ENCODE measurements at regions of chr1 and their contacts with region 1.

Region 1: DNA sequence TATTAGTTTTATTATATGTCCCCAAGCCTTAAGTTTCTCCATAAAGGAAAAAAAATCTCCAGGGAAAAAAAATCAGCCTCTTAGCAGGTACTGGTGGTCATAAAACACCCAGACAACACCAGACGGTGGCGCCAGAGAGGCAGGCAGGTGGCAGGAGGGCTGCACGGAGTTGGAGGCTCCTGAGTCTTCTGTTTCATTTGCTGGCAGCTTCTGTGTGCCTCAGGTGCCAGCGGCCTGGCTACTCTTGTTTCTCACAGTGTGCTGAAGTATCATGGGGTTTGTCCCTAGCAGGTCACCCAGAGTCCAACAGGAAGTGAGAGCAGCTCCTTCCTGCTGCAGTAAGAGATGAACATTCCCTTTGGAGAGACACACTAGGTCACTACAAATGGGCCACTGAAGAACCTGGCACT is 123.3 kb upstream of the GADD45A start:
- DNase-seq: peak; percentile 49 to 82
- ATAC-seq: peak; percentile 91 to 95
- H3K4me3 ChIP-seq: no peak overlapping the region
- H3K27ac ChIP-seq: peak overlapping the region; percentile 60 to 73; a peak in 4 of 6 replicates
- H3K4me1 ChIP-seq: peaks cover 20% of the 10 kb centered on the region
- CTCF ChIP-seq: peak; percentile 76
- EP300 ChIP-seq: no peak
- POLR2A ChIP-seq: no peak
- RAD21 ChIP-seq: peak; percentile 85 to 87

Region 2: DNA sequence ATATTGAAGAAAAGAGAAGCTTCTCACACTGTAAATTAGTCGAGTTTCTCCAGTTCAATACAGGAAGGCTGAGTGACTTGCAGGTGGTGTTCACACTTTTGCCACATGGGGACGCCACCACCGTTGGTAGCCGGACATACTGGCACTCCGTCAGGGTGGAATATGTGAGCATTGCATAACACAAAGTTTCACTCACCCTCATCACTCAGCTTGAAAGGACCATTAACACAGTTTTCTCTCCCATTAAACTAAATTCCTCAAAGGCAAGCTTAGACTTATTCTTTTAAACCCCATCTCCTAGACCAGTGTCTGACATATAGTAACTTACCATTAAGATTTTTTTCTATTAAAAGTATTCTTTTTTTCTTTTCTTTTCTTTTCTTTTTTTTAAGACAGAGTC is 26.2 kb before region 1 on chr1:
- CTCF ChIA-PET with region 1: interaction called, 73 read pairs
- POLR2A ChIA-PET with region 1: interaction called, 3 read pairs
- DNase-seq: peak; percentile 55 to 78
- ATAC-seq: peak; percentile 91 to 92
- H3K4me3 ChIP-seq: no peak overlapping the region
- H3K27ac ChIP-seq: peak overlapping the region; percentile 51 to 54; a peak in 4 of 6 replicates
- H3K4me1 ChIP-seq: peaks cover 16% of the 10 kb centered on the region; the same call in 2 of the 3 replicates
- CTCF ChIP-seq: peak; percentile 78
- EP300 ChIP-seq: no peak
- POLR2A ChIP-seq: no peak
- RAD21 ChIP-seq: peak; percentile 78 to 86

Region 3: GRCh38 chr1:67675800-67676199 is 114.1 kb after region 1 on chr1:
- CTCF ChIA-PET with region 1: interaction called, 10 read pairs
- POLR2A ChIA-PET with region 1: no interaction called
- DNase-seq: no peak
- ATAC-seq: no peak
- H3K4me3 ChIP-seq: no peak overlapping the region
- H3K27ac ChIP-seq: no peak overlapping the region
- H3K4me1 ChIP-seq: peaks cover 5% of the 10 kb centered on the region; the same call in 2 of the 3 replicates
- CTCF ChIP-seq: no peak
- EP300 ChIP-seq: no peak
- POLR2A ChIP-seq: no peak
- RAD21 ChIP-seq: no peak

Region 4: DNA sequence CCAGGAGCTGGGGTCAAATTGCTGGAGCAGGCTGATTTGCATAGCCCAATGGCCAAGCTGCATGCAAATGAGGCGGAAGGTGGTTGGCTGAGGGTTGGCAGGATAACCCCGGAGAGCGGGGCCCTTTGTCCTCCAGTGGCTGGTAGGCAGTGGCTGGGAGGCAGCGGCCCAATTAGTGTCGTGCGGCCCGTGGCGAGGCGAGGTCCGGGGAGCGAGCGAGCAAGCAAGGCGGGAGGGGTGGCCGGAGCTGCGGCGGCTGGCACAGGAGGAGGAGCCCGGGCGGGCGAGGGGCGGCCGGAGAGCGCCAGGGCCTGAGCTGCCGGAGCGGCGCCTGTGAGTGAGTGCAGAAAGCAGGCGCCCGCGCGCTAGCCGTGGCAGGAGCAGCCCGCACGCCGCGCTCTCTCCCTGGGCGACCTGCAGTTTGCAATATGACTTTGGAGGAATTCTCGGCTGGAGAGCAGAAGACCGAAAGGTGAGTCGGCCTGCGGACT is 123.4 kb after region 1 on chr1 and contains the start of gene GADD45A:
- CTCF ChIA-PET with region 1: interaction called, 46 read pairs
- POLR2A ChIA-PET with region 1: interaction called, 42 read pairs
- DNase-seq: peak; percentile 94 to 97
- ATAC-seq: peak; percentile 87 to 95
- H3K4me3 ChIP-seq: peak within 1 kb of the TSS; percentile 80
- H3K27ac ChIP-seq: peak within 1 kb of the TSS; percentile 96 to 99
- H3K4me1 ChIP-seq: peaks cover 43% of the 10 kb centered on the region
- CTCF ChIP-seq: no peak
- EP300 ChIP-seq: no peak
- POLR2A ChIP-seq: peak; percentile 99
- RAD21 ChIP-seq: peak in 1 of 2 experiments; percentile 28; a peak in 1 of 5 replicates
- polyA plus RNA-seq, gene GADD45A: 26.6 and 44.7 TPM in 2 replicates

Region 5: GRCh38 chr1:67749844-67750689 is 188.4 kb after region 1 on chr1:
- CTCF ChIA-PET with region 1: interaction called, 11 read pairs
- POLR2A ChIA-PET with region 1: no interaction called
- DNase-seq: peak in 1 of 2 experiments; percentile 65
- ATAC-seq: peak; percentile 79
- H3K4me3 ChIP-seq: peak overlapping the region; percentile 35; the same call in 1 of the 3 replicates
- H3K27ac ChIP-seq: peak overlapping the region; percentile 89 to 94
- H3K4me1 ChIP-seq: peaks cover 79% of the 10 kb centered on the region
- CTCF ChIP-seq: no peak
- EP300 ChIP-seq: no peak
- POLR2A ChIP-seq: no peak
- RAD21 ChIP-seq: no peak

Region 6: DNA sequence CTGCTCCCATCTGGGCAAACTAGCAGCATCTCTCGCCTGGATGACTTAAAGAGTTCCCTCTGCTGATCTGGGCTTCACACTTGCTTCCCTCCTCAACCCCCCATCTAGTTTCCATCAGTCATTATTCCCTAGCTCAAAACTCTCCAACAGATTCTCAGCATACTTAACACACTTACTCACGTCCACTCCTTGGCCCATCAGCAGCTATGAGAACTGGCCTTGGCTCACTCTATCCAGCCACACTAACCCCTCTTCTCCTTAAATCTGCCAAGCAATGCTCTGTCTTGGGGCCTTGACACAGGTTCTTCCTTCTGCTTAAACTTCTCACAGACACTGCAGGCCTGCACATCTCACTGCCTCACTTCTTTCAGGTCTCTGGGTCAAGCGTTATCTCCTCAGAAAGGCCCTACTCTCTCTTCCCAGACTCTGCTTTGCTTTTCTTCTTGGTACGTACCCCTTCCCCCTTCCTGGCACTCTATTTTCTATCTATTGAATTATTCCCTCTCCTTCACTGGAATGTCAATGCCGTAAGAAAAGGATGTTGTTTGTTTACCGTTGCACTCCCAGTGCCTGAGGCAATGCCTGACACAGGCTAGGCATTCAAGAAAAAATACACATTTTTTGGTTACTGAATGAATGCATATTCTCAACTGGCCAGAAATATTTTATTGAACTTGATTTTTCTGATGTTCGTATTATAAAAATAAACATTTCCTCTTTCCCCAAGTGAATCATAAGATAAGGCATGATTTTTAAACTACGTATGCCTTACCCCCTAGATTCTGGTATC is 230.2 kb after region 1 on chr1:
- CTCF ChIA-PET with region 1: no interaction called
- POLR2A ChIA-PET with region 1: no interaction called
- DNase-seq: peak; percentile 62 to 86
- ATAC-seq: peak; percentile 91 to 93
- H3K4me3 ChIP-seq: peak overlapping the region; percentile 18; the same call in 2 of the 3 replicates
- H3K27ac ChIP-seq: peak overlapping the region; percentile 89 to 99
- H3K4me1 ChIP-seq: peaks cover 80% of the 10 kb centered on the region
- CTCF ChIP-seq: no peak
- EP300 ChIP-seq: peak; percentile 58 to 82; a peak in 2 of 5 replicates
- POLR2A ChIP-seq: no peak
- RAD21 ChIP-seq: peak; percentile 16 to 33; a peak in 2 of 5 replicates

Measured in A549 (cell line).